ENCODE measurements at regions of chr2 and their contacts with region 1.

Region 1: DNA sequence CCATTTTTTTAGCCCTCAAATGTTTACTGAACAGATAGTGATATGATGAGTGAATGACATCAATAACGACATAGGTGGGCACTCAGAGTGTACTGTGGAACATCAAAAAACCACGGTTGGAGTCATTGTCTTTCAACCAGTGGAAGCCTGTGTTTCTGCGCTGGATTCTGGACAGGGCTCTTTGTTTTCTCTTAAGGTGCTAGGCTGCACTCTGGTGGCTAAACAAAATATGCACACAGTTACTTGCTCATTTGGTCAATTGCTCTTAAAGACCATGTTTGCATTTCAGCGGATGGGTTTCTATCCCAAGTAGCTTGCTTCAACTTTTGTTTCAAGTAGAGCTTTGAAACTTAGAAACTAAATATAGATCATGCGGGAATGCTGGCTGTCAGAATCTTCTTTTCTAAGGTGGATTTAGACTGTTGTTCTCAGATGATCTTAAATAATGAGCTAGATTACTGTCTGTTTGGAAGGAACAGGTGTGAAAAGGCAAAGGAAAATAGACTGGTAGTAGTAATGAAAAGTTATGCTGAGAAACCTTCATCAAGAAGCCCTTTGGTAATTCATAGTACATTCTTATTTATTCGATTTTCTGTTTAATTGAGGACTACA is 48.5 kb upstream of the LYPD6B start:
- DNase-seq: peak in 3 of 5 donors; percentile 48 to 55 (median 51)
- ATAC-seq: peak; percentile 61 to 92 (median 85)
- H3K4me3 ChIP-seq: no peak overlapping the region
- H3K27ac ChIP-seq: no peak overlapping the region
- H3K4me1 ChIP-seq: no peaks in the 10 kb centered on the region
- H3K27me3 ChIP-seq: no peaks in the 10 kb centered on the region
- CTCF ChIP-seq: peak; percentile 59 to 81 (median 75)
- POLR2A ChIP-seq: no peak

Region 2: DNA sequence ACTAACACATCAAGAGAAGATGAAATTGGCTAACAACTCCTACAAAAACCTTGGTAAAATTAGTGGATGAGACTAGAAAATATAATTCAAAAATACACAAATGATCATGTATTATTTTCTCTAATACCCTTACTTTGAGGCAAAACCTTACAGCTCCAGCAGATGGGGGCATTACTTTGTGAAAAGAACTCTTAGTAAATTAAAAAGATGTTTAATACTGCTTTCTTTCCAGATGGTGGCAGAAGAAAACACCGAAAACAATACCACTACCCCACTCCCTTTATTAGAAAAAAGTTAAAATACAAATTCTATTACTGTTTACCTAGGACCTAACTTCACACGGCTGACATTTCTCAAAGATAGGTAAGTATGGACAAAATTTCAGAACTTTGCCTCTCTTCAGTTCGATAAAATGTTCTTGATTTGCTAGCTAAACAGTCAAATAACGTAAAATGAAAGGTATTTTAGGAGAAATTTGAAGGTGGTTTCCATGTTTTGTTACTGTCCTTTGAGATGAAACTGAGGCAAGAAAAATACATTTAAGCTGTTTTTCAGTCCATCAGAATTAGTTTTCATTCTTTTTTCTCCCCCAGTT is 1000.1 kb before region 1 on chr2:
- intact Hi-C with region 1: loop called in 3 of 10 experiments (anchors 5 kb)
- DNase-seq: no peak
- ATAC-seq: peak in 1 of 4 donors; percentile 76
- H3K4me3 ChIP-seq: no peak overlapping the region
- H3K27ac ChIP-seq: no peak overlapping the region
- H3K4me1 ChIP-seq: peaks cover 0 to 3% (median 0%) of the 10 kb centered on the region in 12 donors
- H3K27me3 ChIP-seq: no peaks in the 10 kb centered on the region
- CTCF ChIP-seq: peak; percentile 27 to 81 (median 66)
- POLR2A ChIP-seq: no peak

Region 3: GRCh38 chr2:148570989-148571388 is 419.0 kb before region 1 on chr2:
- intact Hi-C with region 1: loop called (anchors 2 to 10 kb)
- DNase-seq: no peak
- ATAC-seq: no peak
- H3K4me3 ChIP-seq: no peak overlapping the region
- H3K27ac ChIP-seq: no peak overlapping the region
- H3K4me1 ChIP-seq: no peaks in the 10 kb centered on the region
- H3K27me3 ChIP-seq: no peaks in the 10 kb centered on the region
- CTCF ChIP-seq: no peak
- POLR2A ChIP-seq: no peak

Region 4: GRCh38 chr2:148627224-148627623 is 362.8 kb before region 1 on chr2:
- intact Hi-C with region 1: loop called in 1 of 10 experiments (anchors 5 kb)
- DNase-seq: no peak
- ATAC-seq: no peak
- H3K4me3 ChIP-seq: no peak overlapping the region
- H3K27ac ChIP-seq: no peak overlapping the region
- H3K4me1 ChIP-seq: peaks cover 0 to 4% (median 0%) of the 10 kb centered on the region in 12 donors
- H3K27me3 ChIP-seq: no peaks in the 10 kb centered on the region
- CTCF ChIP-seq: no peak
- POLR2A ChIP-seq: no peak

Region 5: DNA sequence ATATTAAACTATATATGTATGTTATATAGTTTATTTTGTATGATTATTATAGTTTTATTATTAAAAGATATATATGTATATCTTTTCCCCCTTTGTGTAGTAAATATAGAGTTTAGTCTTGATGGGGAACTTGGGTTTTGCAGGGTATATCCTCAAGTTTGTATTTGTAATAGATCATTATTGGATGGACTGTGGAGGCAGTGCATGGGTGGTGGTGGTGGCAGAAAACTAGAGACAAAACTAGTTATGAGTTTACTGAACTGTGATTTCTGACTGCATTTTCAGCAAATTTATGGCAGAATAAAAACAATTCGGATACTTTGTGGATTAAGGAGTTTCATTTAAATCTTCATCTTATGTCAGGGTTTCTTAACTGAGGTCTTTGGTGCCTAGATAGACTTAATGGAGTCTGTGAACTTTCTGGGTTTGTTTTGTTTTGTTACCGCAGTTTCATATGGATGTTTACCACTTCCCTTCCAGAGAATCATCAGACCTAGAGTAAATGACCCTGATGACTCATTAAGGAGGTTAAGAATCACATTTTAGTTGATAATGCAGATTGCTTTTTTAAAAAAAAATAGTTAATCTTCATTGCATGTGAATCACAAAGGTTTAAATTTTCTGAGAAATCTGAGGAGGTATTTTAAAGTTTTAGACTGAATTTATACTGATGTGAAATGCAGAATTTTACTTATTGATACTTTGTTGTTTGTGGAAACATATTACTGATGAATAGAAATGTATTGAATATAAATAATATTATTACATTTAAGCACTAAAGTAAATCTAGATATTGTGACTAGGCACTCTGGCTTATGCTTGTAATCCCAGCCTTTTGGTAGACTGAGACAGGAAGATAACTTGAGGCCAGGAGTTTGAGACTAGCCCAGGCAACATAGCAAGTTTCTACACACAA is 330.9 kb before region 1 on chr2:
- intact Hi-C with region 1: loop called in 1 of 10 experiments (anchors 10 kb)
- DNase-seq: no peak
- ATAC-seq: peak in 1 of 4 donors; percentile 19
- H3K4me3 ChIP-seq: no peak overlapping the region
- H3K27ac ChIP-seq: peak overlapping the region in 1 of 12 donors; percentile 10
- H3K4me1 ChIP-seq: peaks cover 0 to 64% (median 47%) of the 10 kb centered on the region in 12 donors
- H3K27me3 ChIP-seq: no peaks in the 10 kb centered on the region
- CTCF ChIP-seq: no peak
- POLR2A ChIP-seq: no peak

Measured in heart left ventricle (tissue), 16 donors.